HCT116 (cell line): ENCODE measurements at regions of chr17 and their contacts with region 1.

Region 1: DNA sequence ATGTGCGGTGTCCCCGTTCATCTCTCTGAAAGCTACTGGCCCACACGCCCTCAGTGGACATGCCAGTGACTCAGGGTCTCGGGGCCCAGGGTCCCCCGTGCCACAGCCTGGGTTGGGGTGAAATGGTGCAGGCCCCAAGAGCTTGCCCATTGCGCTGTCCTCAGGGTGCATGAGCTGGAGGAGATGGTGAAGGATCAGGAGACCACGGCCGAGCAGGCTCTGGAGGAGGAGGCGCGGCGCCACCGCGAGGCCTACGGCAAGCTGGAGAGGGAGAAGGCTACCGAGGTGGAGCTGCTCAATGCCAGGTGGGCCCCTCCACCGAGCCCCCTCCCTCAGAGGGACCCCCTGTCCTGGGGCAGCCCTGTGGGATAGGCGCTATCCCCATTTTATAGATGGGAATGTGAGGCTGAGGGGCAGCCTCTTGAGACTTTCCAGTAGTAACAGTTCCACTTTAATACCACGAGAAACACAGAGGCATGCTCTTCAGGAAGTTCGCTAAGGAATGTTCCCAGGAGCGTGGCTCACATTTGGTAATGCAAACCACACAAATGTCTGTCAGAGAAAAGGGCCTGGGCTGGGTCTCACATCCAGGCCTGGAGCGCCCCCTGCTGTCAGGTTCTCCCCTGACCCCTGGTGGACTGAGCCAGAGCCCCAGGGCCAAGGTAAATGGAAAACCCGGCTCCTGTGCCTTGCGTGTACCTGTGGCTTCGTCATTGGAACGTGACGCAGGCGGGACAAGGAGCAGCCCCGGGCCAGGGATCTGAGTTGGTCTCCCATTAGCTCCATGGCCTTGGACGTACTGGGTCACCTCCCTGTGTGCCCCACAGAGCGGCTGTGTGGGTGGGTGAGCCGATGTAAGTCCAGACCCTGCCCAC is 133.7 kb downstream of the RAB11FIP4 start:
- DNase-seq: peak; percentile 49
- ATAC-seq: peak; percentile 95
- H3K4me3 ChIP-seq: no peak overlapping the region
- H3K27ac ChIP-seq: no peak overlapping the region
- H3K4me1 ChIP-seq: peaks cover 0 to 10% of the 10 kb centered on the region in 2 experiments; a peak in 2 of 4 replicates
- H3K27me3 ChIP-seq: no peaks in the 10 kb centered on the region
- CTCF ChIP-seq: peak; percentile 94 to 98 (median 96)
- POLR2A ChIP-seq: no peak
- RAD21 ChIP-seq: peak; percentile 95

Region 2: DNA sequence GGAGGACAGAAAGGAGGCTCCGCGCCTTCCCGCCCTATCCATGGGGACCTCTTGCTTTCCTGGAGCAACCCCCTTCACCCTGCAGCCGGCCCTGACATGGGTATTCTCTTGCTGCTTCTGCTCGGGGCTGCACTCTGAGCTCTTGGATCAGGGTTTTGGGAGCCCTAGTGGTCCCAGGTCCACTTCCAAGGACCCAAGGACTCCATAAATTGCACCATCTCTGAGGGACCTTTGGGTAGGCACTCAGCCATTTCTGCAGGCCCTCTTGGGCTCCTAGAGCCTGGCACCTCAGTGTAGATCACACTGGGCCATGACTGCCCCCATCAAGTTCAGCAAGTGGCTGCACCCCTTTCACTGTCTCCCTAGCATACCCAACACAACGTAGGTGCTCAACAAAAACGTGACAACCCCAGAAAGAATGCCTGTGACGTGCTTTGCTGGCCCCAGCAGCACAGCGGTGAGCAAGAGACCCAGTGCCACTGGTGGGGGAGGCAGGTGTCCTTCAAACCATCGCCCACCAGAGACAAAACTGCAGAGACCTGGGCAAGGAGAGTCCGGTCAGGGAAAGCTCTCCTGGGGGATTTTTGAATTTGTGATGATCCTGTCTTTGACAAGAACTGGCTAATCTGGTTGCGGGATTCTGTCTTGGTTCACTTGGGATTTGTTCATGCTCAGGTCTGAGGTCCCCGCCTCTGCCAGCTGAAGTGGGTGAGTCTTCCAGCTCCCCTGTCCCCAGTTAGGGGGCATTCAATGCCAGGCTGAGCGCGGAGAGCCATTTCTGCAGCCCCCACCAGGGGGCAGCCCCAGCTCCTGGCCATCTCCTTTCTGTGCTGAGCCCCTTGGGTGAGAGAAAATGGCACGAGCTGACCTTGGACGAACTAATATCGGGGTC is 136.1 kb before region 1 on chr17:
- CTCF ChIA-PET with region 1: interaction called, 12 read pairs
- POLR2A ChIA-PET with region 1: no interaction called
- RAD21 ChIA-PET with region 1: no interaction called
- intact Hi-C with region 1: loop called (anchors 1 kb)
- DNase-seq: no peak
- ATAC-seq: peak; percentile 89
- H3K4me3 ChIP-seq: no peak overlapping the region
- H3K27ac ChIP-seq: no peak overlapping the region
- H3K4me1 ChIP-seq: no peaks in the 10 kb centered on the region
- H3K27me3 ChIP-seq: no peaks in the 10 kb centered on the region
- CTCF ChIP-seq: peak; percentile 69 to 89 (median 78); a peak in 5 of 6 replicates
- POLR2A ChIP-seq: no peak
- RAD21 ChIP-seq: peak; percentile 72

Region 3: GRCh38 chr17:31437720-31438420 is 87.3 kb before region 1 on chr17:
- CTCF ChIA-PET with region 1: interaction called, 11 read pairs
- POLR2A ChIA-PET with region 1: interaction called, 3 read pairs
- RAD21 ChIA-PET with region 1: interaction called in 1 of 2 experiments, 6 read pairs
- intact Hi-C with region 1: loop called (anchors 1 kb)
- DNase-seq: no peak
- ATAC-seq: no peak; the same call in 1 of the 2 replicates
- H3K4me3 ChIP-seq: no peak overlapping the region
- H3K27ac ChIP-seq: no peak overlapping the region
- H3K4me1 ChIP-seq: peaks cover 0 to 5% of the 10 kb centered on the region in 2 experiments; a peak in 1 of 4 replicates
- H3K27me3 ChIP-seq: no peaks in the 10 kb centered on the region
- CTCF ChIP-seq: no peak
- POLR2A ChIP-seq: no peak
- RAD21 ChIP-seq: no peak

Region 4: GRCh38 chr17:31446195-31446967 is 78.8 kb before region 1 on chr17:
- CTCF ChIA-PET with region 1: interaction called, 8 read pairs
- POLR2A ChIA-PET with region 1: no interaction called
- RAD21 ChIA-PET with region 1: no interaction called
- intact Hi-C with region 1: loop called (anchors 2 kb)
- DNase-seq: no peak
- ATAC-seq: no peak; the same call in 1 of the 2 replicates
- H3K4me3 ChIP-seq: no peak overlapping the region
- H3K27ac ChIP-seq: no peak overlapping the region
- H3K4me1 ChIP-seq: peaks cover 0 to 12% of the 10 kb centered on the region in 2 experiments; a peak in 2 of 4 replicates
- H3K27me3 ChIP-seq: no peaks in the 10 kb centered on the region
- CTCF ChIP-seq: peak; percentile 37 to 49 (median 38); a peak in 5 of 6 replicates
- POLR2A ChIP-seq: no peak
- RAD21 ChIP-seq: peak; percentile 46; the same call in 1 of the 2 replicates

Region 5: DNA sequence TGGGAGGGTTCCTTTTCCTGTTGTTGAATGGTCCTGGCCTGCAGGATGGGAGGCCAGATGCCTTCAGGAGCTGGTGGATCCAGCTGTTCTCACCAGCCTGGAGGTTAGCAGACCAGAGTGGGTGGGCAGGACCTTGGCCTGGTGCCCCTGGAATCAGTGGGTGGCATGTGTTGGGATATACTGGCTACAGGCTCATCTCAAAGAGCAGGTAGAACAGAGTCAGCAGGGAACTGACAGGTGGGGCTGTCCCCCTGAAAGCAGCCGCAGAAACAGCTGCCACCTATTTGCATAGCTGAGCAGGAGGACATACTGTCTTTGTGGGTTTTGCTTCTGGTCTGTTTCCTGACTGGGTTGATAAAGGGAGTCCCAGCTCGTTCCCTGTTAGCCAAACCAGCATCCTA is 10.4 kb after region 1 on chr17:
- CTCF ChIA-PET with region 1: no interaction called
- POLR2A ChIA-PET with region 1: no interaction called
- RAD21 ChIA-PET with region 1: no interaction called
- intact Hi-C with region 1: no loop called
- DNase-seq: no peak
- ATAC-seq: no peak
- H3K4me3 ChIP-seq: no peak overlapping the region
- H3K27ac ChIP-seq: no peak overlapping the region
- H3K4me1 ChIP-seq: peaks cover 16 to 18% of the 10 kb centered on the region in 2 experiments
- H3K27me3 ChIP-seq: no peaks in the 10 kb centered on the region
- CTCF ChIP-seq: no peak
- POLR2A ChIP-seq: no peak
- RAD21 ChIP-seq: no peak